ENCODE measurements at regions of chr20 and their contacts with region 1.

Region 1: DNA sequence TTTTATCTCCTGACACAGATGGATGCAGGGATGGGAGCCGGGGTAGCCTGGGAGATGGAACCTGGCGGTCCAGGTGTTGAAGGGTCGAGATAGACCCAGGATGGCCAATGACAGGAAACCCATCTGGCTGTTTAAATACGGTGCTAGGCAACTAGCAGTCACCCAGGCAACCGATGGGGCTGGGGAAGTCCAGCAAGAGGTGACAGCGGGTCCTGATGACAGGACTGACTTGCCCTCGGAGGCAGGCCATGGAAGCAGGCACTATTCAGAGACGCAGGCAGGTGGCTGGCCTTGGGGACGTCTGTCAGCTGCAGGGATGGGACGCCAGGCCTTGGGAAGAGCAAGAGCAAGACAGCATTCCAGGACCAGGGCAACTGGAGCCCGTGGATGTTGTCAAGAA is 135.4 kb upstream of the RALGAPA2 start:
- DNase-seq: no peak
- H3K4me3 Mint-ChIP-seq: no peak overlapping the region
- H3K27ac Mint-ChIP-seq: no peak overlapping the region
- H3K4me1 Mint-ChIP-seq: no peaks in the 10 kb centered on the region
- H3K27me3 Mint-ChIP-seq: no peaks in the 10 kb centered on the region

Region 2: GRCh38 chr20:20837574-20838021 is 10.2 kb before region 1 on chr20:
- CTCF ChIA-PET with region 1: interaction called, 10 read pairs
- intact Hi-C with region 1: no loop called
- DNase-seq: peak; percentile 67
- H3K4me3 Mint-ChIP-seq: no peak overlapping the region
- H3K27ac Mint-ChIP-seq: no peak overlapping the region
- H3K4me1 Mint-ChIP-seq: peaks cover 3% of the 10 kb centered on the region
- H3K27me3 Mint-ChIP-seq: peaks cover 7% of the 10 kb centered on the region